Stomach (tissue), 19 donors: ENCODE measurements at regions of chr1 and their contacts with region 1.

Region 1: GRCh38 chr1:203624341-203624712 is 2.3 kb upstream of the ATP2B4 start:
- DNase-seq: peak in 1 of 2 donors; percentile 40
- H3K4me3 ChIP-seq: no peak overlapping the region
- H3K27ac ChIP-seq: peak overlapping the region in 1 of 5 donors; percentile 25
- H3K4me1 ChIP-seq: peaks cover 16 to 36% (median 33%) of the 10 kb centered on the region in 4 donors
- H3K27me3 ChIP-seq: no peaks in the 10 kb centered on the region
- CTCF ChIP-seq: no peak
- EP300 ChIP-seq: no peak
- POLR2A ChIP-seq: no peak

Region 2: GRCh38 chr1:203695116-203695515 is 70.8 kb after region 1 on chr1:
- intact Hi-C with region 1: loop called (anchors 5 kb)
- DNase-seq: no peak
- H3K4me3 ChIP-seq: no peak overlapping the region
- H3K27ac ChIP-seq: peak overlapping the region in 4 of 5 donors; percentile 76 to 85 (median 82)
- H3K4me1 ChIP-seq: peaks cover 29 to 77% (median 50%) of the 10 kb centered on the region in 4 donors
- H3K27me3 ChIP-seq: no peaks in the 10 kb centered on the region
- CTCF ChIP-seq: no peak
- EP300 ChIP-seq: no peak
- POLR2A ChIP-seq: no peak

Region 3: GRCh38 chr1:203765029-203765837 is 140.9 kb after region 1 on chr1 and contains the start of gene LAX1:
- intact Hi-C with region 1: no loop called
- DNase-seq: peak; percentile 43 to 62
- H3K4me3 ChIP-seq: peak within 1 kb of the TSS; percentile 9 to 31 (median 25)
- H3K27ac ChIP-seq: peak within 1 kb of the TSS; percentile 29 to 73 (median 66)
- H3K4me1 ChIP-seq: peaks cover 6 to 18% (median 14%) of the 10 kb centered on the region in 4 donors
- H3K27me3 ChIP-seq: no peaks in the 10 kb centered on the region
- CTCF ChIP-seq: no peak
- EP300 ChIP-seq: no peak
- POLR2A ChIP-seq: no peak
- total RNA-seq, gene LAX1: 0.45 to 2.8 (median 1.1) TPM in 4 of 5 donors, not detected in the other